ENCODE measurements at regions of chr2 and their contacts with region 1.

Region 1: DNA sequence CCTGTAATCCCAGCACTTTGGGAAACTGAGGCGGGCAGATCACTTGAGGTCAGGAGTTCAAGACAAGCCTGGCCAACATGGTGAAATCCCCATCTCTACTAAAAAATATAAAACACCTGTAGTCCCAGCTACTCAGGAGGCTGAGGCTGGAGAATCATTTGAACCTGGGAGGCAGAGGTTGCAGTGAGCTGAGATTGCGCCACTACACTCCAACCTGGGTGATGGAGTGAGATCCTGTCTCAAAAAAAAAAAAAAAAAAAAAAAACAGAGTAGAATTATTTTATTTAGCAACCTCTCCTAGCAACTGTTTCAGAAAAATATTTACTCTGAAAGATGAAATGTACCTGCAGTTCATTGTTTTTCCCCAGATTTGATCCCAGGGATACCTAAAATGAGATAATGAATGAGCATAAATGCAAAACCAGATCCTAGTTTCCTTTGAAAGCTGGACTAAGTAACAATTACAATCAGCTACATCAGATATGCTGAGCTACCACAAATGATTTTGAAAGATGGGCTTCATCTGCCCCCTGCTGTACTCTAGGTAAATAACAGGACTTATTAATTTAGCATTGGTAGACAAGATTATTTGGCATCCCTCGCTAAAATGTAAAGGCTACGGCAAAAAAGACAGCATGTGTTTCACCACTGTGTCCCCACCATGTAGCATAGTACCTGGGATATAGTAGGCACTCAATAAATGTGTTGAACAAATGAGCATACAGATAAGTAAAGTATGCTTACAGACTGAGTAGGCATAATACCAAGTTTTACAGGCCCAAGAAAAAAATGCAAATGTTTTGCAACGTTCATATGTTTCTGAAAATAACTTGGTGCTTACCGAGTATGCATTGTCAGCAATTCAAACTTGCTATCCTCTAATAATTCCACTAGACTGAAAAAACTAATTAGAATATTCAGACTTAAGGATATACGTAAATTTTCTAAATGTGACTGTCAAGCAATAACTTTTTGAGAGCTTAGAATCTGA is 102.5 kb downstream of the ATL2 start:
- DNase-seq: peak; percentile 65
- ATAC-seq: peak; percentile 89
- H3K4me3 ChIP-seq: no peak overlapping the region
- H3K27ac ChIP-seq: no peak overlapping the region
- H3K4me1 ChIP-seq: no peaks in the 10 kb centered on the region
- H3K27me3 ChIP-seq: no peaks in the 10 kb centered on the region
- CTCF ChIP-seq: peak; percentile 53 to 79 (median 63); a peak in 5 of 6 replicates
- EP300 ChIP-seq: no peak
- POLR2A ChIP-seq: no peak
- RAD21 ChIP-seq: peak; percentile 93

Region 2: DNA sequence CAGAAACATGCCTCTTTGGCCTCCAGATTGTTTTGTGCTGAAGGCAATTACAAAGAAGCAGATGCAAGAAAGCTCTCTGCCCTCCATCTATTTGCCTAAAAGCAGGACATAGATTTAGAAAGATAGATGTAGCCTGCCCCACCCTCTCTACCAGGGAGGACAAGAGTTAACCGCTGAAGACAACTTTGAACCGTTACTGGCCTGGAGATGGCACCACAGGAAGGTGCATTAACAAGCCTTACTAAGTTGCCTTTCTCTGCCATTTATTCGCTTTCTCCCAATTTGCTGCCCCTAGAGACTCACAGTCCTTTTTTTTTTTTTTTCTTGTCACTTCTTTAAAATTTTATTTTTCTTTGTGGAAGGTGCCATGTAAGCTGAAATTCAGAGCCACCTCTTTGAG is 378.3 kb before region 1 on chr2:
- CTCF ChIA-PET with region 1: interaction called, 9 read pairs
- POLR2A ChIA-PET with region 1: no interaction called
- RAD21 ChIA-PET with region 1: interaction called, 6 read pairs
- SMC1A ChIA-PET with region 1: interaction called, 7 read pairs
- in situ Hi-C with region 1: no loop called
- intact Hi-C with region 1: loop called (anchors 1 kb)
- DNase-seq: no peak
- ATAC-seq: no peak
- H3K4me3 ChIP-seq: no peak overlapping the region
- H3K27ac ChIP-seq: no peak overlapping the region
- H3K4me1 ChIP-seq: peaks cover 40% of the 10 kb centered on the region
- H3K27me3 ChIP-seq: no peaks in the 10 kb centered on the region
- CTCF ChIP-seq: peak in 2 of 3 experiments; percentile 5 to 30; a peak in 3 of 6 replicates
- EP300 ChIP-seq: no peak
- POLR2A ChIP-seq: no peak
- RAD21 ChIP-seq: peak; percentile 56

Region 3: GRCh38 chr2:37982147-37982582 is 292.4 kb before region 1 on chr2:
- CTCF ChIA-PET with region 1: interaction called, 26 read pairs
- POLR2A ChIA-PET with region 1: no interaction called
- RAD21 ChIA-PET with region 1: interaction called, 26 read pairs
- SMC1A ChIA-PET with region 1: interaction called, 12 read pairs
- in situ Hi-C with region 1: loop called (anchors 5 kb)
- intact Hi-C with region 1: loop called (anchors 1 kb)
- DNase-seq: peak; percentile 30
- ATAC-seq: peak; percentile 61
- H3K4me3 ChIP-seq: no peak overlapping the region
- H3K27ac ChIP-seq: no peak overlapping the region
- H3K4me1 ChIP-seq: no peaks in the 10 kb centered on the region
- H3K27me3 ChIP-seq: no peaks in the 10 kb centered on the region
- CTCF ChIP-seq: peak; percentile 61 to 76 (median 70)
- EP300 ChIP-seq: no peak
- POLR2A ChIP-seq: no peak
- RAD21 ChIP-seq: peak; percentile 64

Region 4: GRCh38 chr2:38115216-38116032 is 159.2 kb before region 1 on chr2:
- CTCF ChIA-PET with region 1: interaction called, 21 read pairs
- POLR2A ChIA-PET with region 1: no interaction called
- RAD21 ChIA-PET with region 1: interaction called, 11 read pairs
- SMC1A ChIA-PET with region 1: interaction called, 9 read pairs
- in situ Hi-C with region 1: no loop called
- intact Hi-C with region 1: loop called (anchors 1 kb)
- DNase-seq: peak; percentile 55
- ATAC-seq: peak; percentile 96
- H3K4me3 ChIP-seq: no peak overlapping the region
- H3K27ac ChIP-seq: no peak overlapping the region; the same call in 1 of the 2 replicates
- H3K4me1 ChIP-seq: peaks cover 9% of the 10 kb centered on the region
- H3K27me3 ChIP-seq: no peaks in the 10 kb centered on the region
- CTCF ChIP-seq: peak; percentile 91 to 97 (median 96)
- EP300 ChIP-seq: no peak
- POLR2A ChIP-seq: no peak
- RAD21 ChIP-seq: peak; percentile 98

Region 5: DNA sequence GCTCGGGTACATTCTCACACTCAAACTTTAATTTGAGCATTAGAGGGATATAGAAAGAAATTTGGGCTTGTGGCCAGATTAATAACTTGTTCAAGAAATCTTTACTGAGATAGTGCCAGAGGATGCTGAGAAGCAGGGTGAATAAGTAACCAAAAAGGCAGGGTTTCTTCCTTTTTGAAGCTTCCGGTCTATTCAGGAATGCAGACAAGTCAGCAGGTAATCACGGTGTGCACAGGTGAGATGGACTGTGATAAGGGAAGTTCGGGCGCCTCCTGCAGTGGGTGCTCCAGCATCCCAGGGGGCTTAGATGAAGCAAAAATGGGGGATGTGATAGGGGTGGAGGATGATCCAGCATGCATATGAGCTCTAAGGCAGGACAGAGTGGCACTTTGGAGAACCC is 153.8 kb before region 1 on chr2:
- CTCF ChIA-PET with region 1: interaction called, 21 read pairs
- POLR2A ChIA-PET with region 1: no interaction called
- RAD21 ChIA-PET with region 1: interaction called, 11 read pairs
- SMC1A ChIA-PET with region 1: interaction called, 9 read pairs
- in situ Hi-C with region 1: no loop called
- intact Hi-C with region 1: no loop called
- DNase-seq: no peak
- ATAC-seq: no peak
- H3K4me3 ChIP-seq: no peak overlapping the region
- H3K27ac ChIP-seq: no peak overlapping the region
- H3K4me1 ChIP-seq: 0 out of 2 replicates have a peak, but pooled peaks cover 4% of the 10 kb centered on the region
- H3K27me3 ChIP-seq: no peaks in the 10 kb centered on the region
- CTCF ChIP-seq: no peak
- EP300 ChIP-seq: no peak
- POLR2A ChIP-seq: no peak
- RAD21 ChIP-seq: no peak

Region 6: DNA sequence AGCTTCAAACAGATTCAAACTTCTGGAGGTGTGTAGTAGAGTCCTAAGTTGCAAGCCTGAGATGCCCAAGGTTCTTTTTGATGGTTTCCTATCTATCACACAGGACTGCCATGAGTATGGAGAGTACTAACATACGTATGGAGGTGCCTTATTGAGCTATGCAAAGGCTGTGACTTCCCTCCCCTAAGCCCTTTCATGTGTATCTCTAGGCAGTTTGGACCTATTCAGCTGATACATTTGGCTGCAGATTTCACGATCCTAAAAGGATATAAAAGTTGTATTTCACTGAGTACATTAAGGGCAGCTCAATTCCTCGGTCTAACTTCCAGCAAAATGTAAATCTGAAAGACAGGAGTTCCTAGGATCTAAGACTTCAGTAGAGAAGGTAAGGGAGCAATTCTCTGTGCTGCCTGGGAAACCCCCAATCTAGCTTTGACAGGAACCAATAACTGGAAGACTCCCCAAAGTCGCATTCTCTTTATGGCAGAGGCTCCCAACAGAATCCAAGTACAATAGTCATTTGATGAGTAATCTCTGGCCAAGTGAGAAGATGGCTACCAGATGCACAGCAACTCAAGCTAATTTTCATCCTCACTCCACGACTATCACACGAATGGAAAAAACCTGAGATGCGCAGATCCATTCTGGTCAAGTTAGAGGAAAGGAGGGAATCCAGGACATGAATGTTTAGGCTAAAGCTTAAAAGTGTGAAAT is 18.7 kb after region 1 on chr2:
- CTCF ChIA-PET with region 1: interaction called, 6 read pairs
- POLR2A ChIA-PET with region 1: no interaction called
- RAD21 ChIA-PET with region 1: interaction called, 3 read pairs
- SMC1A ChIA-PET with region 1: interaction called, 10 read pairs
- in situ Hi-C with region 1: no loop called
- intact Hi-C with region 1: no loop called
- DNase-seq: no peak
- ATAC-seq: no peak
- H3K4me3 ChIP-seq: no peak overlapping the region
- H3K27ac ChIP-seq: no peak overlapping the region
- H3K4me1 ChIP-seq: no peaks in the 10 kb centered on the region
- H3K27me3 ChIP-seq: no peaks in the 10 kb centered on the region
- CTCF ChIP-seq: no peak
- EP300 ChIP-seq: no peak
- POLR2A ChIP-seq: no peak
- RAD21 ChIP-seq: no peak